SK-N-SH (cell line): ENCODE measurements at regions of chr11 and their contacts with region 1.

Region 1: DNA sequence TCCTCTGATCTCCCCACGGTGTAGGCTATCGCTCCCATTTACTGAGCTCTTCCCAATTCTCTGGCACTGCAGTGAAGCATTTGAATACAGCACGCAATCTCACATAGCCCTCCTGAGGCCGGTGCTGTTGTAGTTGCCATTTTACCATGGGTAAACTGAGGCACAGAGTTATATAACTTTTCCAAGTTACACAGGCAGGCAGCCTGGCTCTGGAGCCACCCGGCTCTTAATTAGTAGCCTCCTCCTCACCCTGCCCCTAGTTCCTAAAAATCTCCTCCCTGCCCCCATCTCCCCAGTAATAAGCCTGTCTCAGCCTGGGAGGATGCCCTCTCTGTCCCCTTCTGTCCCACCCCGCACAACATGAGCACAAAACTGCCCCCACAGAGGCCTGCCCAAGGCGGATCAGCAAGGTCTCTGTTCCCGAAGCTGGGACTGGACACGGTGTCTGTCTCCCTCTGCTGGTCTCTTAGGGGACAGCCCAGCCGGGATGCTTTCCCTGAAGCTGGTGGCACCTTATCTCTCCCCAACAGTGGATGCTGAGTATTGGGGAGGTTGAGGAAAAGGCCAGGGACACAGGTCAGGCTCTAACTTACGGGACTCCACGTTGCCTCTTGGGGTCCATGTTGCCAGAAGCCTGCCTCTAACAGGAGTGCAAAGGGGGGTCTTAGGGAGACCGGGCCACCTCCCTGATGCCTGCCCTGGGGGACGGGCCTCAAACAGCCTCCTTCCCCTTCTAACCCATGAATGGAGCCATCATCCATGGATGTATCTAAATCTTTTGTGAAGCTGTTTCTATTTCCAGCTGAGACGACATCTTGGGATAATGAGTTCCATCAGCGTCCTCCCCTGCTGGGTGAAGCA is 9.1 kb upstream of the CLCF1 start:
- DNase-seq: peak; percentile 86
- H3K4me3 ChIP-seq: no peak overlapping the region; a peak in 1 of 4 replicates
- H3K27ac ChIP-seq: no peak overlapping the region
- H3K4me1 ChIP-seq: peaks cover 20 to 29% of the 10 kb centered on the region in 2 experiments; a peak in 3 of 4 replicates
- H3K27me3 ChIP-seq: no peaks in the 10 kb centered on the region
- CTCF ChIP-seq: peak; percentile 94
- EP300 ChIP-seq: no peak
- RAD21 ChIP-seq: peak; percentile 99

Region 2: GRCh38 chr11:67006139-67006884 is 376.2 kb before region 1 on chr11:
- CTCF ChIA-PET with region 1: no interaction called
- POLR2A ChIA-PET with region 1: no interaction called
- DNase-seq: peak; percentile 61
- H3K4me3 ChIP-seq: no peak overlapping the region
- H3K27ac ChIP-seq: no peak overlapping the region
- H3K4me1 ChIP-seq: peaks cover 0 to 3% of the 10 kb centered on the region in 2 experiments; a peak in 1 of 4 replicates
- H3K27me3 ChIP-seq: no peaks in the 10 kb centered on the region
- CTCF ChIP-seq: no peak
- EP300 ChIP-seq: no peak
- RAD21 ChIP-seq: no peak

Region 3: GRCh38 chr11:67095214-67095507 is 287.3 kb before region 1 on chr11:
- CTCF ChIA-PET with region 1: no interaction called
- POLR2A ChIA-PET with region 1: no interaction called
- DNase-seq: no peak
- H3K4me3 ChIP-seq: no peak overlapping the region
- H3K27ac ChIP-seq: no peak overlapping the region
- H3K4me1 ChIP-seq: no peaks in the 10 kb centered on the region
- H3K27me3 ChIP-seq: no peaks in the 10 kb centered on the region
- CTCF ChIP-seq: peak; percentile 1; the same call in 1 of the 2 replicates
- EP300 ChIP-seq: no peak
- RAD21 ChIP-seq: no peak

Region 4: DNA sequence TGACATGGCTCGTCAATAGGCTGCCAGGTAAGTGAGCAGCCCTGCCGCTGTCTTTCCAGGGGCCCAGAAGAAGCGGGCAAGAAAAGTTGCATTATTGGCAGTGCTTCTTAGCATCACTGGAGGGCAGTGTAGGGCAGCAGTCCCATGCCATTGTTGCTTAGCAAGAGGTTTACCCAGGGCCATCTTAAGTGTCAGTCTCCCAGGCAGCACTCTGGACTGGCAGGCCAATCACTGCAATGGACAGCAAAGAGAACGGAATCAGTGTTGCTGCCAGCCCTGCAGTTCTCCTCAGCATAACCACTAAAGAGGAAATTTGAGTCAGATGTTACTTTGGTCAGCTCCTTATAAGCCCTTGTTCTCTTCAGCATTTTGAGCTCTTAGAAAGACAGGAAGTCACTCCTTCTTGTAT is 129.7 kb before region 1 on chr11:
- CTCF ChIA-PET with region 1: interaction called, 11 read pairs
- POLR2A ChIA-PET with region 1: no interaction called
- DNase-seq: no peak
- H3K4me3 ChIP-seq: no peak overlapping the region
- H3K27ac ChIP-seq: no peak overlapping the region; a peak in 1 of 4 replicates
- H3K4me1 ChIP-seq: no peaks in the 10 kb centered on the region
- H3K27me3 ChIP-seq: no peaks in the 10 kb centered on the region
- CTCF ChIP-seq: peak; percentile 50
- EP300 ChIP-seq: no peak
- RAD21 ChIP-seq: peak; percentile 43

Region 5: GRCh38 chr11:67311556-67312082 is 70.9 kb before region 1 on chr11:
- CTCF ChIA-PET with region 1: interaction called, 84 read pairs
- POLR2A ChIA-PET with region 1: no interaction called
- DNase-seq: no peak
- H3K4me3 ChIP-seq: no peak overlapping the region
- H3K27ac ChIP-seq: peak overlapping the region in 1 of 2 experiments; percentile 83; a peak in 1 of 4 replicates
- H3K4me1 ChIP-seq: peaks cover 0 to 19% of the 10 kb centered on the region in 2 experiments; a peak in 1 of 4 replicates
- H3K27me3 ChIP-seq: no peaks in the 10 kb centered on the region
- CTCF ChIP-seq: no peak
- EP300 ChIP-seq: no peak
- RAD21 ChIP-seq: no peak

Region 6: GRCh38 chr11:67345920-67346799 is 36.3 kb before region 1 on chr11:
- CTCF ChIA-PET with region 1: interaction called, 955 read pairs
- POLR2A ChIA-PET with region 1: no interaction called
- DNase-seq: peak; percentile 10
- H3K4me3 ChIP-seq: no peak overlapping the region
- H3K27ac ChIP-seq: no peak overlapping the region
- H3K4me1 ChIP-seq: peaks cover 5 to 29% of the 10 kb centered on the region in 2 experiments; a peak in 1 of 4 replicates
- H3K27me3 ChIP-seq: no peaks in the 10 kb centered on the region
- CTCF ChIP-seq: peak; percentile 77
- EP300 ChIP-seq: no peak
- RAD21 ChIP-seq: peak; percentile 66

Region 7: GRCh38 chr11:67401495-67402191 is 19.1 kb after region 1 on chr11 and contains the start of gene PPP1CA:
- CTCF ChIA-PET with region 1: interaction called, 29 read pairs
- POLR2A ChIA-PET with region 1: no interaction called
- DNase-seq: peak; percentile 100
- H3K4me3 ChIP-seq: peak within 1 kb of the TSS; percentile 85 to 89
- H3K27ac ChIP-seq: peak within 1 kb of the TSS; percentile 81 to 91
- H3K4me1 ChIP-seq: peaks cover 9 to 17% of the 10 kb centered on the region in 2 experiments; a peak in 2 of 4 replicates
- H3K27me3 ChIP-seq: no peaks in the 10 kb centered on the region
- CTCF ChIP-seq: peak; percentile 27; the same call in 1 of the 2 replicates
- EP300 ChIP-seq: no peak
- RAD21 ChIP-seq: peak; percentile 22
- polyA plus RNA-seq, gene PPP1CA: 210 and 261 TPM in 2 replicates